AG04450 (cell line): ENCODE measurements at regions of chr20 and their contacts with region 1.

Region 1: DNA sequence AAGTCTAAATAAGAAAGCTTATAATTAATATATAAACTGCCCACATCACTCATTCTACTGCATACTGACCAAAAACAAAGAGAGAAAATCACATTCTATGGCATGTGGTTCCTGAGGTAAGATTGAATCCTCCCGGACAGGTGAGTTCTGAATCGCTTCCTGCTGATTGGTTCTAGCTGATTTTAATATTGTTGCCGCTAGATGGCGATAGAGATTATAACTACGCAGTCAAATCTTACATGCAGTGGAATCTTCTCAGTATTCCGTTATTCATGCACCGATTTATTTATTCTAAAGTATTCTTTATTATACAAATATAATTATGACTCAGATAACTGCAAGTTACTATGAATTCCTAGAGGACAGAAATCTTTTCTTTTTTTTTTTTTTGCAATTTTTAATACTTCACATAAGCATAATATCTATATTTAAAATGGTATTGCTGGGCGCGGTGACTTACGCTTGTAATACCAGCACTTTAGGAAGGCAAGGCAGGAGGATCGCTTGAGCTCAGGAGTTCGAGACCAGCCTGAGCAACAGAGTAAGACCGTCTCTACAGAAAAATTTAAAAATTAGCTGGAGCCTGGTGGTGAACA is 24.2 kb upstream of the TMX4 start:
- DNase-seq: no peak
- H3K4me3 ChIP-seq: no peak overlapping the region
- H3K27ac ChIP-seq: no peak overlapping the region
- H3K27me3 ChIP-seq: no peaks in the 10 kb centered on the region
- CTCF ChIP-seq: peak; percentile 69

Region 2: GRCh38 chr20:8057871-8058270 is 14.1 kb after region 1 on chr20:
- CTCF ChIA-PET with region 1: interaction called, 16 read pairs
- POLR2A ChIA-PET with region 1: no interaction called
- DNase-seq: no peak
- H3K4me3 ChIP-seq: no peak overlapping the region
- H3K27ac ChIP-seq: no peak overlapping the region
- H3K27me3 ChIP-seq: no peaks in the 10 kb centered on the region
- CTCF ChIP-seq: no peak

Region 3: DNA sequence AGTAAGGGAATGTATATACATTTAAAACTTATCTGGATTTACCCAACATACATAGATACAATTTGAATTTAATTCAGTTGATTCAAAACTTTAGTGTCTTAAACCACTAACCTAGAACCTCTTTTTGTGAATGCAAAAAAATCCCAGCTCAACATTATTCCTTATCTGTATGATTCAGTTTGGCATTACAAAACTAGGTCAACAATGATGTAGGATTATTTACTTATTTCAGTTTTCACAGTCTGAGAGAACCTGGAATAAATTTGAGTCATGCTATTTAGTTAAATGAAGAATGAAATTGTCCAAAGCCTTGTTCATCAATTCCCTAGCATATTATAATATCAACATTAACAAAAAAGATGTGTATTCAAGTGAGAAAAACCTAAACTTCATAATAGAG is 80.9 kb after region 1 on chr20:
- CTCF ChIA-PET with region 1: interaction called, 57 read pairs
- POLR2A ChIA-PET with region 1: no interaction called
- DNase-seq: no peak
- H3K4me3 ChIP-seq: no peak overlapping the region
- H3K27ac ChIP-seq: no peak overlapping the region
- H3K27me3 ChIP-seq: no peaks in the 10 kb centered on the region
- CTCF ChIP-seq: no peak

Region 4: DNA sequence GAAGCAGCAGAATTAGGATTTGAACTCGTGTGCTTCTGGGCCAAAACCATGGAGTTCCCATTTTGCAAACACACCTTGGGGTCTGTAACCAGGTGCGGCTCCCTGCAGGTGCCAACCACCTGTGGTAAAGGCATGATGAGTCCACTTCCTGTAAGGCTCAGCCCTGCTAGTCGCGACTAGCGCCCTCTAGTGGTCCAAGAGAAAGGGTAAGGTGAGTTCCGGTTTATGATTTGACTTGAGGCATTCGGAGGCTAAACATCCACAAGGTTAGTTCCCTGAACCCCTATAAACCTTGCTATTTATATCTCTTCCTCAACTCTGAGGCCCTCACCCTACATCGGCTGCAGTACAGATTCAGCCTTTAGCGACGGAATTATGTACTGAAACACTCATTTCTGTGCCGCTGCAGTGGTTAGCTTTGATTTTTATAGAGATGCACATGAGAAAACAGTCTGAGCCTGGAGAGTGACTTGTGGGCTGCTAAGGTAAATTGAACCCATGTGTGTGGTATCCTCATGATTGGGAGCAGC is 261.7 kb after region 1 on chr20:
- CTCF ChIA-PET with region 1: no interaction called
- POLR2A ChIA-PET with region 1: no interaction called
- DNase-seq: no peak
- H3K4me3 ChIP-seq: no peak overlapping the region
- H3K27ac ChIP-seq: no peak overlapping the region
- H3K27me3 ChIP-seq: no peaks in the 10 kb centered on the region
- CTCF ChIP-seq: peak; percentile 58

Region 5: GRCh38 chr20:8389381-8390036 is 345.7 kb after region 1 on chr20:
- CTCF ChIA-PET with region 1: interaction called, 55 read pairs
- POLR2A ChIA-PET with region 1: no interaction called
- DNase-seq: peak; percentile 32
- H3K4me3 ChIP-seq: no peak overlapping the region
- H3K27ac ChIP-seq: no peak overlapping the region
- H3K27me3 ChIP-seq: no peaks in the 10 kb centered on the region
- CTCF ChIP-seq: peak; percentile 46